Activated T-helper 1 cell treated with anti-CD3 and anti-CD28 coated beads, Interleukin-12 subunit alpha, Interleukin-12 subunit beta, Interleukin-2, Interleukin-4 antibody, amounts not matched to agents 30 ng/mL and 10 ng/mL and 1 ng/mL, durations not matched to agents 14 hours and 24 hours and 36 hours (primary cell): ENCODE measurements at regions of chr7 and their contacts with region 1.

Region 1: DNA sequence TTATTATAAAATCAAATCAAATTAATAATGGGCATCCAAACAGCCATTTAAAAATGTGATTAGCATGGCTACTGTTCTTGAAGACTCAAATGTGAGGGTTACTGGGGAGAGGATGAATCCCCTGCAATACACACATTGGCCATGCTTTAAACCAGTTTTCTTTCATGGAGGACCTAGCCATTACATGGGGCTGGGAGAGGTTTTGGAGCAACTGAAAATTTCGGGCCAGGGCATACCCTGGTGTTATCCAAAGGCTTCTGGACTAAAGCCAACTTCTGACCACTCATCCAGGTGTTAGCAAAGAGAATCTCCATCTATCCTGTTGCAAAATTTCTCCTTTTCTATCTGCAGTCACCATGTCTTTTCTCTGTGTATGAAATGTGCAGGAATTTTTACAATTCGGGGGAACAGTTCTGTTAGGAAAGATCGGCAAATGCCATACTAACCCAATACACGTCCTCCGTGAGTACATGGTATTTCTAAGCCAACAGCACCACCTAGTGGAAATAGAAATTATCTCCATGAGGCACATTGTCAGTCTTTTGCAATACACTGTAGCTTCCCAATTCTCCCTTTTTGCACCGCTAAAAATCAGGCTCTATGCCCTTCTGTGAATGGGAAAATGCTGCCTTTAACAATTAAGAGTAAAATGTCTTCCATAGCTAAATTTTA is 47.0 kb upstream of the ZNF107 start:
- DNase-seq: no peak
- H3K4me3 Mint-ChIP-seq: no peak overlapping the region
- H3K27ac Mint-ChIP-seq: peak overlapping the region; percentile 18
- H3K4me1 Mint-ChIP-seq: no peaks in the 10 kb centered on the region
- H3K27me3 Mint-ChIP-seq: no peaks in the 10 kb centered on the region

Region 2: DNA sequence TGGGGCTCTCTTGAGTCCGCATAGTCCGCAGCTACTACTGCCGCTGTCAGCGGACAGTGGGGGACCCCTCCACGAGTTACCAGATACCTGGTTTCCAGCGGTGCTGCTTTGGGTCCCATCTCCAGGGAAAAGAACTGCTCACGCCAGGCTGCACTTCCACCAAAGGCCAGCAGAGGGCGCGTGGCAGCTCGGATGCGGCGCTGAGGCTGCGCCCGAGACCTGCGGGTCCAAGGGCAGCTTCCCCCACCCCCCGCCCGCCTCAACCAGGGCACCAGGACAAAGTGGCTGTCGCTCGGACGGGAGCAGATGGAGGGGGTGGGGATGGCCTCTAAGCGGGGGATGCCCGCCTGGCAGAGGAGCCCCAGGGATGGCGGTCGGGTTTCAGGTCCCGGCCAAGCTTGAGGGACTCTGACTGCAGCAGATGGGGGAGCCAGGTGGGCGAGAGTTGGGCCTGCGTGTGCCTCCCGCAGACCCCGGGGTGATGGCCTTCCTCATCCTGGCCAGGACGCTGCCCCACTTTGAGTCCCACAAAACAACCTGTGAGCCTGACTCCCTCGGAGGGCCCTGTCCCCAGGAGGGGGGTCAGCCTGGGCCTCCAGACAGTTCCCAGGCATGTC is 435.7 kb before region 1 on chr7:
- intact Hi-C with region 1: loop called (anchors 5 kb)
- DNase-seq: no peak
- H3K4me3 Mint-ChIP-seq: no peak overlapping the region
- H3K27ac Mint-ChIP-seq: no peak overlapping the region
- H3K4me1 Mint-ChIP-seq: no peaks in the 10 kb centered on the region
- H3K27me3 Mint-ChIP-seq: no peaks in the 10 kb centered on the region

Region 3: GRCh38 chr7:64463636-64464378 is 155.1 kb before region 1 on chr7:
- intact Hi-C with region 1: no loop called
- DNase-seq: no peak
- H3K4me3 Mint-ChIP-seq: no peak overlapping the region
- H3K27ac Mint-ChIP-seq: no peak overlapping the region
- H3K4me1 Mint-ChIP-seq: no peaks in the 10 kb centered on the region
- H3K27me3 Mint-ChIP-seq: no peaks in the 10 kb centered on the region

Region 4: DNA sequence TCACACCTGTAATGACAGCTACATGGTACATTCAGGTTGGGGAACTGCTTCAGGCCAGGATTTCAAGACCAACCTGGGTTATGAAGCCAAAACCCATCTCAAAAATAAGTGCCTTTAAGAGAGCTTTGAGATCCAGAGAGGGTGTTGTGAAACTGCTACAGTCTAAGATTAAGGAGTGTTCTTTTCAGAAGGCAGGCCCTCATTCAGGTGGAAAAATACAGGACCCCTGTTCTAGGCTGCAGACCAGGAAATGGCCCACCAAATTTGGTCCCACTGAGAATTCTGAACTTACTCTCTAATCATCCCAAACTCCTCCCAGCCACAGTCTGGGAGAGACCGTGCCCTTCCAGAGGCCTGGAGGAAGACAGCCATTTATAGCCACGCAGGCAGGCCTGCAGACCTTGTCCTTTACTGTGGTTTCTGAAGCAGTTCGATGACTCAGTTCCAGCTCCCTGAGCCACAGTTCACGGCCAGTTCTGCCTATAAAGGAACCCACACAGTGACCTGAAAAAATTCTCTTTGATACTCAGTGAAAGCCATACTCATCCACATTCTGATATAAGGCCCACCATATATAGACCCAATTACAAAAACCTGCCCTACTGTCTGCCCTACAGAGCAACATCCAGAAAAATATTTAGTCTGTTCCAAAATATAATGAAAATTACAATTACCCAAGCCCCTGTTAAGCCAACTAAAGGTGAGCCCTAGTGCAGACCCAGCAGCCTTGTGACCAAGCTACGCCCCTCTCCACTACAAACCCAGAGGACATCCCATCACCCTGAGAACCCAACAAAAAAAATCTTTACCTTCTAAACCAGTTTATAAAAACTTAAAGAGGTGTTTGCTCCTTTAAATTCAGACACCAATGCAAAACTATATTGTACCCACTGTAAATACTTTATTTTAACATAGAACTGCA is 77.2 kb before region 1 on chr7:
- intact Hi-C with region 1: no loop called
- DNase-seq: no peak
- H3K4me3 Mint-ChIP-seq: no peak overlapping the region
- H3K27ac Mint-ChIP-seq: no peak overlapping the region
- H3K4me1 Mint-ChIP-seq: no peaks in the 10 kb centered on the region
- H3K27me3 Mint-ChIP-seq: no peaks in the 10 kb centered on the region